ENCODE measurements at regions of chr7 and their contacts with region 1.

Region 1: DNA sequence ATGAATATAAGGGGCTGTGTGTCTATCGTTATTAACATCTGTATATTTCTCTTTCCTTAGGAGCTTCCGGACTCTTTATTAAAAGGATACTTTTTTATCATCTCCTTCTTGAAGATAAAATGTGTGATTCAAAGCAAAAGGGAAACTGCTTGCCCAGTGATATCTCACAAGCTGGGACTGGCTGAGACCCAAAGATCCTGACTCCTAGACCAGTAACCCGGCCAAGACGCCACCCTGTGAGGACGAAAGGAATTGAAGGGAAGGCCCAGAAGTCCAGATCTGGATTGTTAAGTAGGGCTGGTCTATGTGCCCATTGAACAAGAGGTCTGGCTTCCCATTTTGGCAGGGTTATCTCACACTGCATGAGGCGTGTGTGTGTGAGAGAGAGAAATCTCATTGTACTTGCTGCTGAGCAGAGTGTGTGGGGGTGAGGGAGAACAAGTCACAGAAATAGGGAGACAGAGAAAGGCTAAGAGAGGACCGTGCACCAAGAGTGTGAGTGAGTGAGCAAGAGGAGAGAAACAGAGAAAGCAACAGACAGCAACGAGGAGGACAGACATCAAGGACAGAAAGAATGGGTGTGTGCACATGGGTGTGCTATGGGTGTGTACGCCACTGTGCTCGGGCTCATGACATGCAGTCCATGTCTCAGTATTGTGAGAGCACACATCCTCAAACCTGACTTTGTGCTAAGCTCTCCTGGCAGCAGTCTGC is 75.4 kb downstream of the PLXNA4 start:
- DNase-seq: peak; percentile 80
- H3K4me3 ChIP-seq: no peak overlapping the region
- H3K27ac ChIP-seq: no peak overlapping the region
- H3K4me1 ChIP-seq: peaks cover 0 to 6% (median 0%) of the 10 kb centered on the region in 4 donors
- H3K27me3 ChIP-seq: no peaks in the 10 kb centered on the region
- CTCF ChIP-seq: peak; percentile 12 to 23 (median 18)
- EP300 ChIP-seq: no peak
- POLR2A ChIP-seq: no peak

Region 2: DNA sequence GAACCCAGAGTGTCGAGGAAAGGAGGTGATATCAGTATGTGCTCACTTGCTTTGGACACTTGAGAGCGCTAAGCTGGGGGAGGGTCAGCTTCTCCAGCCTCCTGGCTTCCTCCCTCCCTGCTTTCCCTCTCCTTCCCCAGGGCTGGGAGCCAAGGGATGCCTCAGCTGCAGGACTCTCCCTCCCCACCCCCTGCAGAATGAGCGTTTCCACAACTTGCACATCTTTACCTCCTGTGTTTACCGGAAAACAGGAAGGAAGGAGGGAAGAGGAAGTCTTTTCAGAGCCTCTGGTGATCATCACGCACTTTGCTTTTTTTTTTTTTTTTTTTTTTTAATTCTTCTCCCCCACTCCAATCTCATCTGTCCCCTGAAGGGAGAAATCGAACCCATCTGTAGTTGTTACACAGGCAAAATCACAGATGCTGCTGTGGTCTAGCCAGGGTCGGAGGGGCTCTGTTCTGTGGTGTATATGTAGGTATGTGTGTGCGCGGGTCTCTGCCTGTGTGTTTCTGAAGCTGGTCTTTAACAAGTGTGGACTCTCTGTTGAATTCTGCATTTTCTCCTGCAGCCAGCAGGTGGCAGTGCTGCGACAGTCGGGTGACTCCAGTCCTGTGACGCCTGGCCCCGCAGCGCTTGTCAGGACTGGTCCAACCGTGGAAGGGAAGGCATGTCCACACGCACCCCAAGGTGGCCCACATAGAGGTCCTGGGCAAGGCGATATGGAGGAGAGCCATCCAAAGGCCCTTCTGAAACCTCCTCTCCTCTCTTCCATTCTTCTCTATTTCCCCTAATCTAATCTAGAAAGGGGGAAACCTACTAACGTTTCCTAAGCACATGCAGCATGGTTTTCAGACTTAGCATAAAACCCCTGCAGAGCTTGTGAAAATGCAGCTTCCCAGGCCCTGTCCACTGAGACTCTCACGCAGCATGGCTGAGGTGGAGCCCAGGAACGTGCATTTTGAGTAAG is 182.2 kb before region 1 on chr7:
- intact Hi-C with region 1: loop called (anchors 5 kb)
- DNase-seq: peak; percentile 92
- H3K4me3 ChIP-seq: no peak overlapping the region
- H3K27ac ChIP-seq: no peak overlapping the region
- H3K4me1 ChIP-seq: peaks cover 0 to 13% (median 12%) of the 10 kb centered on the region in 4 donors
- H3K27me3 ChIP-seq: peaks cover 0 to 23% (median 0%) of the 10 kb centered on the region in 3 donors
- CTCF ChIP-seq: peak; percentile 73 to 94 (median 84)
- EP300 ChIP-seq: no peak
- POLR2A ChIP-seq: no peak